Gastrocnemius medialis (tissue), 4 donors: ENCODE measurements at regions of chr12 and their contacts with region 1.

Region 1: GRCh38 chr12:39272871-39273770 is 169.8 kb downstream of the KIF21A start:
- DNase-seq: no peak
- ATAC-seq: no peak
- H3K4me3 ChIP-seq: no peak overlapping the region
- H3K27ac ChIP-seq: no peak overlapping the region
- H3K4me1 ChIP-seq: no peaks in the 10 kb centered on the region
- H3K27me3 ChIP-seq: no peaks in the 10 kb centered on the region
- CTCF ChIP-seq: peak in 3 of 5 experiments; percentile 15 to 64 (median 48)
- POLR2A ChIP-seq: no peak

Region 2: GRCh38 chr12:38324896-38325295 is 948.2 kb before region 1 on chr12:
- in situ Hi-C with region 1: loop called in 2 of 4 experiments (anchors 25 kb)
- intact Hi-C with region 1: loop called (anchors 10 kb)
- DNase-seq: no peak
- ATAC-seq: no peak
- H3K4me3 ChIP-seq: no peak overlapping the region
- H3K27ac ChIP-seq: no peak overlapping the region
- H3K4me1 ChIP-seq: no peaks in the 10 kb centered on the region
- H3K27me3 ChIP-seq: no peaks in the 10 kb centered on the region
- CTCF ChIP-seq: no peak
- POLR2A ChIP-seq: no peak

Region 3: GRCh38 chr12:38332814-38333213 is 940.3 kb before region 1 on chr12:
- in situ Hi-C with region 1: loop called in 2 of 4 experiments (anchors 25 kb)
- intact Hi-C with region 1: loop called (anchors 10 kb)
- DNase-seq: no peak
- ATAC-seq: no peak
- H3K4me3 ChIP-seq: no peak overlapping the region
- H3K27ac ChIP-seq: no peak overlapping the region
- H3K4me1 ChIP-seq: no peaks in the 10 kb centered on the region
- H3K27me3 ChIP-seq: no peaks in the 10 kb centered on the region
- CTCF ChIP-seq: no peak
- POLR2A ChIP-seq: no peak

Region 4: DNA sequence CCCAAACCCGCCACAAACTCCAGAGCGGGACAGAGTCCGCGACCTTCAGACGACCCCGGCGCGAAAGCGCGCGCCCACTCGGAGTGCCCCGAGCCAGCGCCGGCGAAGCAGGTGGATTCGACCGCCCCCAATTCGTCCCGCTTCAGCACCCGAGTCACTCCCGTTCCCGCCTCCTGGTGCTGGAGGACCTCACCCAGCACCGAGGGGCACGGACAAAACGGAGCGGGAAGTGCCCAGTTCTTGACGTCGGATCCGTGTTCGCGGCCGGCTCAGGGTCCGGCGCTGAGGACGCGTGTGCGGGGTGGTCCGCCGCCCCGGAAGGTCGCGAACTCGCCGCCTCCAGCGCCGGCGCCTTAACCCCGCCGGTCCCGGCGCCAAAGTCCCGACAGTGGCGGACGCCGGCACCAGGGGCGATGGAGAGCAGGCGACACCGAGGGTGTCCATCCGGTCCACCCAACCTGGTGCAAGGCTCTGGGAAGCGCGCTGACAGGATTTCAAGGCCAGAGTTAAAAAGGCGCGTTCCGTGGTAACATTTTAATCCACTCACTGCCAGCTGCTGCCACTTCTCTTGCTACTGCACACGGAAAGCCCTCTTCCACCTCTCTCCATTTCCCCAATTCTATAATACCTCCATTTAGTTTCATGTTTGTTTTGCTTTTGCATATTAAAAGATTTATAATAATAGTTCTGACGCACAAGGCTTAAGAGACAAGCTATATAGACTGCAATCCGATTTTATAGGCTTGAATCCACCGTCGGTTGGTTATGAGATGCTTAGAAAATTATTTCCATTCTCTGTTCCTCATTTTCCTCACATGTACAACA is 127.7 kb before region 1 on chr12:
- in situ Hi-C with region 1: loop called in 1 of 4 experiments (anchors 25 kb)
- intact Hi-C with region 1: no loop called
- DNase-seq: no peak
- ATAC-seq: no peak
- H3K4me3 ChIP-seq: peak overlapping the region in 3 of 4 donors; percentile 40 to 46 (median 43)
- H3K27ac ChIP-seq: no peak overlapping the region
- H3K4me1 ChIP-seq: no peaks in the 10 kb centered on the region
- H3K27me3 ChIP-seq: peaks cover 5 to 20% (median 14%) of the 10 kb centered on the region in 3 donors
- CTCF ChIP-seq: peak in 2 of 5 experiments; percentile 15 to 38
- POLR2A ChIP-seq: no peak

Region 5: DNA sequence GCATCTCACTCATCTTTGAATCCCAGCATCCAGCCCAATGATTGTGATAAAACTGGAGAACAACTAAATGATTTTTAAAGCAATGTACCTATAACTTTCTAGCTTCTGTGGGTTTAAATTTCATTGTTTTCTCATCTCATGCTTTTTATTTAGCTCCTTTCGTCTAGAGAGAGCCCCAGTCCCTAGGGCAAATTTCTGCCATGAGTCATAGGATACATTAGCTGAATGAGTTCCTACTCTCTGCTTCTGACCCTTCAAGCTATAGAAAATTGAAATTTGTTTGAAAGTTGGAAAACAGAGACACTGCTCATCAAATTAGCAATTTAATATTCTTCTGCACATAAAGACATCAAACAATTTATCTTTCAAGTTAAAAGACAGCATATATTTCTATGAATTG is 55.9 kb after region 1 on chr12:
- in situ Hi-C with region 1: no loop called
- intact Hi-C with region 1: no loop called
- DNase-seq: no peak
- ATAC-seq: no peak
- H3K4me3 ChIP-seq: no peak overlapping the region
- H3K27ac ChIP-seq: no peak overlapping the region
- H3K4me1 ChIP-seq: no peaks in the 10 kb centered on the region
- H3K27me3 ChIP-seq: no peaks in the 10 kb centered on the region
- CTCF ChIP-seq: no peak
- POLR2A ChIP-seq: no peak